HEK293 (cell line): ENCODE measurements at regions of chr6 and their contacts with region 1.

Region 1: DNA sequence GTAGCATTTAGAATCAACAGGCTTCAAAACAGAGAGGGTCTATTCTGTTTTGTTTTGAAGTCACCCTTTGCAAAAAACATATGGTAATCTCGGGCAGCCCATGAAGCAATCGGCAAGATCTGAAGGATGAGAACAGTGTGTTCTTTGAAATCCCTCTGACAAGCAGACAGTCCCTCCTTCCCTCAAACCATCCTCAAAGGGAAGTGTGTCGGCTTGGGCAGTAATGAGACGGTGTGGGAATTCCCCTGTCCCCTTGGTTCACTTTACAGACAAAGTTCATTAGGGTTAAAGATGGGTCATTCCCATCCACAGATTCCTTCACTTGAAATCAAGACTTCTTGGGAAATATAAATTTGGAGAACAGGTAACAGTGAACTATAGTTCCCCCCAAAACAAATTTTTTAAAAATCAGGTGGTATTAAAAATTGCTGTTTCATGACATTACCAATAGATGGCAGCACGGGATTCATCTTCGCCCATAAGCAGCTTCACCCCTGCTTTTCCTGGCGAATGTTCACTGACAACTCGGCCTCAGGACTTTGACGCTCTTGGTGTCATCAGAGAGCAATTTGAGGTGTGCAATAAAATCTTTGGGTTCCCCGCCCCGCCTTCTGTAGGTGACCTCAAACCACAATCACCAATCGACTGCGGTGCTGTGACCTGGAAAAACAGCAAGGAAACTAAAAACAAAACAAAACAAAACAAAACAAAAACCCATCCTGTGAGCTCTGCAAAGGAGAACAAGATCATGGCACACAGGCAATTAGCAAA is 159.3 kb upstream of the TNFAIP3 start:
- H3K4me3 ChIP-seq: no peak overlapping the region
- H3K27ac ChIP-seq: no peak overlapping the region
- H3K4me1 ChIP-seq: no peaks in the 10 kb centered on the region
- CTCF ChIP-seq: peak; percentile 66; the same call in 1 of the 2 replicates

Region 2: GRCh38 chr6:136967876-136968752 is 739.7 kb before region 1 on chr6:
- CTCF ChIA-PET with region 1: no interaction called
- POLR2A ChIA-PET with region 1: no interaction called
- H3K4me3 ChIP-seq: no peak overlapping the region
- H3K27ac ChIP-seq: no peak overlapping the region
- H3K4me1 ChIP-seq: no peaks in the 10 kb centered on the region
- CTCF ChIP-seq: peak; percentile 75

Region 3: DNA sequence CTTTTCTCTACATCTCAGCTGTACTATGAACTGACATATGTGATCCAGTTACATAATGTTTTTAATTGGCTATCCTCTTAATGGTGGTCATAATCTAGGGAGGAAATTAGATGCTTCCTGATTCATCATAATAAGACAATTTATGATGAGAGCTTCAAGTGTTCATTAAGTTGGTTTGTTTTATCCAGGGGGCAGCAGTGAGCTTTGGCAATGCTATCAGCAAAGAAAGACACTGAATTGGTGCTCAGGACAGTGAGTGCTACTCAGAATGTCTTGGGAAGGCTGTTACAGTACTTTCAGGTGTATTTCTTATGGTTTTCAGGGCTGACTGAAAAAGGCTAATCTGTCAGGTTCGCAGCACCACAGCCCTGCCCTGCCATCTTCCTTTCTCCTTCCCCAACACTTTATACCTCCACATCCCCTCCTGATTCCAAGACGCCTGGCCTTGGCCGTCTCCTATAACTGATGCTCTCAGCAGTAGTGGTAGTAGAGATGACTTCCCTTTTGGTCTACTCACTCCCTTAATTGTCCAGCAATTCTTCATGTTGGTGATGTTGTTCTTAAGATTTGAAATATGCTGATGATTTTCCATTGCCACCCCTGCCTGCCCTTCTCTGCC is 92.3 kb after region 1 on chr6:
- CTCF ChIA-PET with region 1: interaction called, 13 read pairs
- POLR2A ChIA-PET with region 1: no interaction called
- H3K4me3 ChIP-seq: no peak overlapping the region
- H3K27ac ChIP-seq: no peak overlapping the region
- H3K4me1 ChIP-seq: no peaks in the 10 kb centered on the region
- CTCF ChIP-seq: no peak

Region 4: GRCh38 chr6:137866914-137867684 is 159.3 kb after region 1 on chr6 and contains the start of gene TNFAIP3:
- CTCF ChIA-PET with region 1: interaction called, 17 read pairs
- POLR2A ChIA-PET with region 1: interaction called, 4 read pairs
- H3K4me3 ChIP-seq: peak within 1 kb of the TSS; percentile 67
- H3K27ac ChIP-seq: peak within 1 kb of the TSS; percentile 60; the same call in 1 of the 2 replicates
- H3K4me1 ChIP-seq: peaks cover 16% of the 10 kb centered on the region
- CTCF ChIP-seq: peak; percentile 68

Region 5: DNA sequence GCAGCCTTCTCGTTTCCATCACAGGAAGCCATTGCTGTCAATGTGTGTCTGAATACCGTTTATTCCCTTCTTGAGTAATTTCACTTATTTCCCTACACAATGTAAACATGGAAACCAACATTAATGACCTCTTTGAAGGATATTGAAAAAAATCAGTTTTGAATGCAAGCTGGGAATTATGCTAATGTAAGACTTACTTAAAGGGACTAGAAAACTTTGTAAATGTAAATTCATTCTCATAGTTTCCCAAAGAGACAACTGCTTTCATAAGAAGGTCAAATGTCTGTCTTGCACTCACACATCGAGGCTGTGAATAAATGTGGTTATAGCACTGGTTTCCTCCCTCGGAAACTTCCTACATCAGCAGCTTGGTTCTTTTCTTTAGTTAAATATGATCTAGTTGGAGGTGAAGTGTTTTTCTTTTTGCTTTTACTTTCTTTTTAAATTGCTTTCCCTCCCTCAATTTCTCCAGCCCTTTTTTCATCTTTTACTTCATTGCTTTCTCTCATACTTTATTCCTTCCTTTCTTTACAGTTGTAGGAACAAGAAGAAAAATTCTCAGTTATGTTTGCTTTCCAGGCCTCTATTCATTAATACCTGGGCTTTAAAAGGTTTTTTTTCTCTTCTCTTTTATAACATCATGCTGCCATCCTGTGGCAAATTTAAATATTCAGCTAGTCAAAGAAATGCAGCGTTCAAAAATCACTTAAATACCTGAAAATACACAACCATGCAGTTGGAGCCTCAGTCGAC is 267.6 kb after region 1 on chr6:
- CTCF ChIA-PET with region 1: interaction called, 10 read pairs
- POLR2A ChIA-PET with region 1: no interaction called
- H3K4me3 ChIP-seq: no peak overlapping the region
- H3K27ac ChIP-seq: no peak overlapping the region
- H3K4me1 ChIP-seq: no peaks in the 10 kb centered on the region
- CTCF ChIP-seq: 0 out of 2 replicates have a peak, but pooled peaks have one; percentile 13